Psoas muscle (tissue), 8 donors: ENCODE measurements at regions of chrX and their contacts with region 1.

Region 1: DNA sequence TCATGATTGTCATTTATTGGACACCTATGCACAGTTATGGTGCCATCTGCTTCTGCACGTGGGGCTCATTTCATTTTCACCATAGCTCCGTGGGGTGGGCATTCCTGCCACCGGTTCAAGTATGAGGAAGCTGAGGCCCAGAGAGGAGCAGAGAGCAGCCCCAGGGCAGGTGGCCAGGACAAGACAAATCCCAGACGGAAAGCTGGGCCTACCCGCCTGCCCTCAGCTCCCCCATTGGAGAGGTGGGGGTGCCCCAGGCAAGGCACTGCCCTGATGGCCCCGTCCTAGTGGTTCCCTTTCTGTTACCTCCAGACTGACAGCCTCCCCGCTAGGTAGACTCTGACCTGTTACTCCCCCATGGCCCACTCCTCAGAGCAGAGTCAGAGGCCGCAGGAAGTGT is 73.6 kb upstream of the HUWE1 start:
- DNase-seq: no peak
- ATAC-seq: no peak
- H3K4me3 ChIP-seq: no peak overlapping the region
- H3K27ac ChIP-seq: no peak overlapping the region
- H3K4me1 ChIP-seq: no peaks in the 10 kb centered on the region
- H3K27me3 ChIP-seq: peaks cover 0 to 6% (median 0%) of the 10 kb centered on the region in 3 donors
- CTCF ChIP-seq: no peak

Region 2: DNA sequence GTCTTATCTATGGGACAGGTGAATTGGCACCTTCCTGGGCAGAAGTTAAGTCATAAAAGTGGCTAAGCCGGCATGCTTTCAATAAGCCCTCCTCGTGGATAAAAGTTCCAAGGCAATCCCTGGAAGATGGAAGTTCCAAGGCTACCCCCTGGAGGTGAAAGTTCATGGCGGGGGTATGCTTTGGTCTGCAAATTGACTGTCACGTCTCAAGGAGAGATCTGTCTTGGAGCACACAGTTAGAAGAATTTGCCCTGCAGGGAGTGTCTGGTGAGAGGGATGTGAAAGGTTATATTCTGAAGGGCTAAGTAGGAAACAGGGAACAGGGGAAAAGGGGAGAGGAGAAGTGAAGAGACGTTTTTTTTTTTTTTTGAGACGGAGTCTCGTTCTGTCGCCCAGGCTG is 737.7 kb before region 1 on chrX:
- intact Hi-C with region 1: loop called in 1 of 2 experiments (anchors 10 kb)
- DNase-seq: no peak
- ATAC-seq: no peak
- H3K4me3 ChIP-seq: no peak overlapping the region
- H3K27ac ChIP-seq: no peak overlapping the region
- H3K4me1 ChIP-seq: no peaks in the 10 kb centered on the region
- H3K27me3 ChIP-seq: peaks cover 0 to 41% (median 0%) of the 10 kb centered on the region in 3 donors
- CTCF ChIP-seq: no peak

Region 3: DNA sequence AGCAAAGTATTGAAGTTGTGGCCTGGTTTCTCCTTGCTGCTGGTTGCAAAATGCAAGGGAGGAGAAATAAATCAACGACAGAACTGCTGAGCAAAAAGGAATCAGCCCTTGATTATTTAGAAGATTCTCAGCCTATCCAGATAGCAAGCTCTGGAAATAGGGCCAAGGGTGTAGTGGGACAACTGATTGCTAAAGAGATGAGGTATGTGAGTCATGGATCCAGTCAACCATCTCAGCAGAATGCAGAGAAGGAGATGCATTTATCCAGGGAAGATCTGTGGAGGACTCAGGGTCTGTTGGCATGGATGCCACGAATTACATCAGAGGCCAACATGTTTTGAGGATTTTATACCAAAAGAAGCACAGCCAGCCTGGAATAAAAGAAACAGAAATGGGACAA is 1899.8 kb after region 1 on chrX:
- intact Hi-C with region 1: no loop called
- DNase-seq: no peak
- ATAC-seq: no peak
- H3K4me3 ChIP-seq: no peak overlapping the region
- H3K27ac ChIP-seq: no peak overlapping the region
- H3K4me1 ChIP-seq: no peaks in the 10 kb centered on the region
- H3K27me3 ChIP-seq: peaks cover 0 to 7% (median 0%) of the 10 kb centered on the region in 3 donors
- CTCF ChIP-seq: no peak